Gastrocnemius medialis (tissue), 4 donors: ENCODE measurements at regions of chr21 and their contacts with region 1.

Region 1: GRCh38 chr21:45000977-45001728 is 61.3 kb downstream of the SLX9 start:
- DNase-seq: peak; percentile 80 to 90
- ATAC-seq: peak; percentile 96 to 98
- H3K4me3 ChIP-seq: peak overlapping the region in 1 of 4 donors; percentile 6
- H3K27ac ChIP-seq: peak overlapping the region in 1 of 4 donors; percentile 5
- H3K4me1 ChIP-seq: peaks cover 10 to 12% of the 10 kb centered on the region in 2 donors
- H3K27me3 ChIP-seq: no peaks in the 10 kb centered on the region
- CTCF ChIP-seq: no peak
- POLR2A ChIP-seq: no peak

Region 2: DNA sequence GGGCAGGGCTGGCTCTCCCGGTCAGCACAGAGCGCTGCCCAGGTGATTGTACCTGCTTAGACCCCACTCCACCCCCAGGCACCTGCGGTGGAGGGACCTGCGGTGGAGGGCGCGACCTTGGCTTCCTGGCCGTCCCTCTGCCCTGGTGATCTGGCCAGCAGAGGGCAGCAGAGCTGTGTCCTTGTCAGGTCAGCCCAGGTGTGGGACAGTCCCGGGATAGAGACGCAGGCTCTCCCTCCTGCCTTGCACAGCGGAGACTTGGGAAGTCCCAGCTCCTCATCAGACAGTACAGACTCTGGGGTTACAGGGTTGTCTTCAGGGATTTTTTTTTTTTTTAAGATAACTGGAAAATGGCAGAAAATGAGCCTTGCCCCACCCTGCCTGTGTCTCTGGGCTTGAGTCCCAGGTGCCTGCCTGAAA is 51.4 kb before region 1 on chr21:
- in situ Hi-C with region 1: no loop called
- intact Hi-C with region 1: loop called (anchors 5 kb)
- DNase-seq: peak; percentile 82 to 94
- ATAC-seq: peak; percentile 40 to 53
- H3K4me3 ChIP-seq: no peak overlapping the region
- H3K27ac ChIP-seq: peak overlapping the region; percentile 47 to 96 (median 92)
- H3K4me1 ChIP-seq: peaks cover 63 to 64% of the 10 kb centered on the region in 2 donors
- H3K27me3 ChIP-seq: no peaks in the 10 kb centered on the region
- CTCF ChIP-seq: peak; percentile 90 to 98 (median 96)
- POLR2A ChIP-seq: peak in 1 of 2 donors; percentile 8

Region 3: GRCh38 chr21:45074048-45074817 is 73.1 kb after region 1 on chr21 and contains the start of gene ADARB1:
- in situ Hi-C with region 1: no loop called
- intact Hi-C with region 1: loop called (anchors 5 kb)
- DNase-seq: peak in 1 of 2 donors; percentile 51
- ATAC-seq: peak; percentile 80 to 85
- H3K4me3 ChIP-seq: peak within 1 kb of the TSS; percentile 72 to 90 (median 80)
- H3K27ac ChIP-seq: peak within 1 kb of the TSS; percentile 84 to 95 (median 91)
- H3K4me1 ChIP-seq: peaks cover 33 to 40% of the 10 kb centered on the region in 2 donors
- H3K27me3 ChIP-seq: no peaks in the 10 kb centered on the region
- CTCF ChIP-seq: no peak
- POLR2A ChIP-seq: peak; percentile 89 to 90
- total RNA-seq, gene ADARB1: 5.9 to 11.5 (median 6.9) TPM